ENCODE measurements at regions of chr7 and their contacts with region 1.

Region 1: GRCh38 chr7:25167262-25167843 is 42.3 kb upstream of the CYCS start:
- DNase-seq: no peak
- H3K4me3 Mint-ChIP-seq: no peak overlapping the region
- H3K27ac Mint-ChIP-seq: no peak overlapping the region
- H3K4me1 Mint-ChIP-seq: no peaks in the 10 kb centered on the region
- H3K27me3 Mint-ChIP-seq: peaks cover 2% of the 10 kb centered on the region

Region 2: GRCh38 chr7:25098096-25099046 is 69.0 kb before region 1 on chr7:
- intact Hi-C with region 1: loop called (anchors 5 kb)
- DNase-seq: peak; percentile 36
- H3K4me3 Mint-ChIP-seq: no peak overlapping the region
- H3K27ac Mint-ChIP-seq: no peak overlapping the region
- H3K4me1 Mint-ChIP-seq: peaks cover 12% of the 10 kb centered on the region
- H3K27me3 Mint-ChIP-seq: peaks cover 7% of the 10 kb centered on the region